CD8-positive, alpha-beta T cell (primary cell): ENCODE measurements at regions of chr16 and their contacts with region 1.

Region 1: GRCh38 chr16:90057738-90058173 is 19.4 kb downstream of the PRDM7 start:
- DNase-seq: peak in 2 of 9 experiments; percentile 42 to 44
- ATAC-seq: peak; percentile 51
- H3K4me3 ChIP-seq: no peak overlapping the region
- H3K4me3 Mint-ChIP-seq: no peak overlapping the region
- H3K27ac ChIP-seq: no peak overlapping the region
- H3K27ac Mint-ChIP-seq: no peak overlapping the region
- H3K4me1 ChIP-seq: no peaks in the 10 kb centered on the region
- H3K4me1 Mint-ChIP-seq: no peaks in the 10 kb centered on the region
- H3K27me3 ChIP-seq: no peaks in the 10 kb centered on the region
- H3K27me3 Mint-ChIP-seq: peaks cover 4% of the 10 kb centered on the region
- CTCF ChIP-seq: no peak

Region 2: DNA sequence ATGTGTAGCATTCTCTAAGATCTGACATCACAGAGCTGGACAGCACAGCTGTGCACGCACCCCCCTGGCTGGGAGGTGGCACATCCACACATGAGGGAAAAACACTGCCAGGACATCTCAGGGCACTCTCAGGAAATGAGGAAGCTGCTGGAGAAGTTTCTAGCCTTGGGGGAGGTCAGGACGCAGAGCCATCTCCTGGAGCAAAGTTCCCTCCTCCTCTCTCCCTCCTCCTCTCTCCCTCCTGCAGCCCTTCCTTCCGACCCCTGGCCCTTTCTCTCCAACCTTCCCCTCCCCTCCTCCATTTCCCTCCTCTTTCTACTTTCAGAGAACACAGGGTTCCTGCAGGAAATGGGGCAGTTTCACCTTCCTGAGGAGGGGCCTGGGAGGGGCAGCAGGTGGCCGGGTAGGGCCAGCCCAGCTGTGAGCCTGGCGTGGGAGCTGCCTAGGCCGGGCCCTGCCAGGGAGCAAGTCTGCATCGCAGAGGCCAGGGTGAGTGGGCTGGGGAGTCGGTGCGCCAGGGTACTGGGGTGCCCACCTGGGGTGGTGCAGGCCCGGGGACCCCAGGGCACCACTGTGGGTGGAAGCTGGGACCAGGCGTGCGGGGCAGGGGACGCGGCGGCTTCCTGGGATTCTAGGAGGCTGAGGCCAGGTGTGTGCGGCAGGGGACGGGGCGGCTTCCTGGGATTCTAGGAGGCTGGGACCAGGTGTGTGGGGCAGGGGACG is 444.4 kb before region 1 on chr16 and contains the start of gene DPEP1:
- CTCF ChIA-PET with region 1: no interaction called
- POLR2A ChIA-PET with region 1: no interaction called
- intact Hi-C with region 1: loop called in 1 of 2 experiments (anchors 5 kb)
- DNase-seq: no peak
- ATAC-seq: no peak
- H3K4me3 ChIP-seq: no peak within 1 kb of the TSS
- H3K4me3 Mint-ChIP-seq: no peak within 1 kb of the TSS
- H3K27ac ChIP-seq: no peak within 1 kb of the TSS
- H3K27ac Mint-ChIP-seq: no peak within 1 kb of the TSS
- H3K4me1 ChIP-seq: peaks cover 15% of the 10 kb centered on the region
- H3K4me1 Mint-ChIP-seq: peaks cover 12% of the 10 kb centered on the region
- H3K27me3 ChIP-seq: no peaks in the 10 kb centered on the region
- H3K27me3 Mint-ChIP-seq: no peaks in the 10 kb centered on the region
- CTCF ChIP-seq: no peak
- total RNA-seq, gene DPEP1: not detected